ENCODE measurements at regions of chr9 and their contacts with region 1.

Region 1: GRCh38 chr9:120936011-120936763 is 9.6 kb upstream of the TRAF1 start:
- DNase-seq: peak; percentile 69 to 94 (median 88)
- ATAC-seq: peak; percentile 65
- H3K4me3 ChIP-seq: no peak overlapping the region
- H3K4me3 Mint-ChIP-seq: peak overlapping the region; percentile 30
- H3K27ac ChIP-seq: peak overlapping the region; percentile 52 to 95
- H3K27ac Mint-ChIP-seq: peak overlapping the region; percentile 90
- H3K4me1 ChIP-seq: peaks cover 61% of the 10 kb centered on the region
- H3K4me1 Mint-ChIP-seq: peaks cover 60% of the 10 kb centered on the region
- H3K27me3 ChIP-seq: no peaks in the 10 kb centered on the region
- H3K27me3 Mint-ChIP-seq: no peaks in the 10 kb centered on the region
- CTCF ChIP-seq: peak; percentile 84

Region 2: GRCh38 chr9:120464176-120464886 is 471.9 kb before region 1 on chr9:
- CTCF ChIA-PET with region 1: no interaction called
- POLR2A ChIA-PET with region 1: no interaction called
- intact Hi-C with region 1: no loop called
- DNase-seq: no peak
- ATAC-seq: no peak
- H3K4me3 ChIP-seq: no peak overlapping the region
- H3K4me3 Mint-ChIP-seq: no peak overlapping the region
- H3K27ac ChIP-seq: no peak overlapping the region
- H3K27ac Mint-ChIP-seq: no peak overlapping the region
- H3K4me1 ChIP-seq: no peaks in the 10 kb centered on the region
- H3K4me1 Mint-ChIP-seq: no peaks in the 10 kb centered on the region
- H3K27me3 ChIP-seq: no peaks in the 10 kb centered on the region
- H3K27me3 Mint-ChIP-seq: no peaks in the 10 kb centered on the region
- CTCF ChIP-seq: no peak

Region 3: DNA sequence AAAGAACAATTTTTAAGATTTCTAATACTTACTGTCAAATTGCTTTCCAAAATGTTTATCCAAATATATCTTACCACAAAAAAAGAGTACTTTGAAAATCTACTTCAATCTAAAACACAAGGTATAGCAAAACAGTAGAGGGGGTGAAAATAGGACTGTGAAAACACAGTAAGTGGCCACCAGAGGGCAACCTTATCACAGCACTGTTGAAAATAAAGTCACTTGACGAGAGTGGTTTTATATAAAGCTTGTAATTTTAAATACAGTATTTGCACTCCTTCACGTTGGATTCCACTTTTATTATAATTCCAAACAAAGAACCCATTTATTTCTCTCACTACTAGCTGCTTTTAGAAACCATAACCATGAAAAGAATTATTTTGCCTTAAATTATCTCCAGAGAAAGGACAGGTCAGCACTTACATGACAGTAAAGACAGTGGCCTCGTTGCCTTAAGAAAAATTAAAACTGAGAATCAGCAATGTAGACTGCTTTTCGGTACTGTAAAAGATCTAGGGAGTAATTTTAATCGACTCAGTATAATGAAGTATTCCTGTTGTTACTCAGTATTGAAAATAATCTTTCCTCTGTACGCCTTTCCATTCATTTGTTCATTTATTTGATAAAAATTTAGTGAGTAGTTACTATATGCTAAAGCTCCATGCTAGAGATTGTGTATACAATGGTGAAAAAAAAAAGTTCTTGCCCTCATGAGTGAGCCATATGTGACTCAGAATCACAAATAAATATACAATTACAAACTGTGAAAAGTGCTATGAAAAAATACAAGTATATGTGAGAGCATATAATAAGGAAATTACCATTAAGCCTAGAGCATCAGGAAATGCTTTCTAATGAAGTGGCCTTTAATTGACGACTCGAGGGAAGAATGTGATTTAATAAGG is 316.2 kb before region 1 on chr9:
- CTCF ChIA-PET with region 1: no interaction called
- POLR2A ChIA-PET with region 1: no interaction called
- intact Hi-C with region 1: no loop called
- DNase-seq: peak; percentile 8 to 76 (median 59)
- ATAC-seq: peak; percentile 65
- H3K4me3 ChIP-seq: no peak overlapping the region
- H3K4me3 Mint-ChIP-seq: no peak overlapping the region
- H3K27ac ChIP-seq: no peak overlapping the region
- H3K27ac Mint-ChIP-seq: no peak overlapping the region
- H3K4me1 ChIP-seq: no peaks in the 10 kb centered on the region
- H3K4me1 Mint-ChIP-seq: no peaks in the 10 kb centered on the region
- H3K27me3 ChIP-seq: no peaks in the 10 kb centered on the region
- H3K27me3 Mint-ChIP-seq: no peaks in the 10 kb centered on the region
- CTCF ChIP-seq: peak; percentile 98

Region 4: DNA sequence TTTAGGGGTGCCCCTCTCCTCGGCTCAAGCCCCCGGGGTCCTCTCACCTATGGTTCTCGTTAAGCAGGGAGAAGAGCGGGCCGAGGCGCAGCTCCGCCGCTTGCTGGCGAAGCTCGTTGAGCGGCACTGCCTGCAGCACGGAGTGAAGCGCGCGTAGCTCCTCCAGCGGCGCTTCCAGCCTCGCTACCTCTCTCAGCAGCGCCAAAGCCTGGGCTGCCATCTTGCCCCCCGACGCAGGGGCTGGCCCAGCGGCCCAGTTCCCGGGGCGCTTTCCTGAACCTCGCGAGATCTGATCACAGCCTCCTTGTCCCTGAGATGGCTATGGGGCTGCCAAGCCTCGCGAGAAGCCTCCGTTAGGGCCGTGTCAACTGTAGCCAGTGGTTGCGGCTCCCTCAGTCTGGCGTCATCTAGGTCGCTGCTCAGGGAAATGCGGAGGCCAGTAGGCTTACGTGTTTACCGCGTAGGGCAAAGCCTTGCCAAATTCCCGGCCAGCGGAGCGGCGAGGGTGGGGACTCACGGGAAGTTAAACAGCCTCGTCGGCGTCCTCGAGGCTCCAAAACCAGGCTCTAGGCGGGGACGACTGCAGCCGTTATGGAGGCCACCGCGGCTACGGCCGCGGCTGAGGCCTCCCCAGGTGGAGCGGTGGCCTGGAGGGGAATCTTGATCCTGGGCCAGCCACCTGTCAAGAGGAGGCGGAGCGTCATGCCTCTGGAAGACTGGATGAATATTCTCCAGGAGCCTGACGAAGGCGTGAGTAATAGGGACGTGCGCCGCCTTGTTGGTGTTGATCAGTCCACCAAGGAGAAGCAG is 93.3 kb before region 1 on chr9 and contains the start of gene PSMD5:
- CTCF ChIA-PET with region 1: interaction called, 6 read pairs
- POLR2A ChIA-PET with region 1: interaction called, 4 read pairs
- intact Hi-C with region 1: loop called in 1 of 2 experiments (anchors 1 kb)
- DNase-seq: peak; percentile 88 to 99 (median 95)
- ATAC-seq: peak; percentile 88
- H3K4me3 ChIP-seq: peak within 1 kb of the TSS; percentile 92 to 97
- H3K4me3 Mint-ChIP-seq: peak within 1 kb of the TSS; percentile 94
- H3K27ac ChIP-seq: peak within 1 kb of the TSS; percentile 94 to 98
- H3K27ac Mint-ChIP-seq: peak within 1 kb of the TSS; percentile 98
- H3K4me1 ChIP-seq: peaks cover 65% of the 10 kb centered on the region
- H3K4me1 Mint-ChIP-seq: peaks cover 78% of the 10 kb centered on the region
- H3K27me3 ChIP-seq: no peaks in the 10 kb centered on the region
- H3K27me3 Mint-ChIP-seq: no peaks in the 10 kb centered on the region
- CTCF ChIP-seq: no peak
- total RNA-seq, gene PSMD5: 38.5 to 58.2 TPM

Region 5: DNA sequence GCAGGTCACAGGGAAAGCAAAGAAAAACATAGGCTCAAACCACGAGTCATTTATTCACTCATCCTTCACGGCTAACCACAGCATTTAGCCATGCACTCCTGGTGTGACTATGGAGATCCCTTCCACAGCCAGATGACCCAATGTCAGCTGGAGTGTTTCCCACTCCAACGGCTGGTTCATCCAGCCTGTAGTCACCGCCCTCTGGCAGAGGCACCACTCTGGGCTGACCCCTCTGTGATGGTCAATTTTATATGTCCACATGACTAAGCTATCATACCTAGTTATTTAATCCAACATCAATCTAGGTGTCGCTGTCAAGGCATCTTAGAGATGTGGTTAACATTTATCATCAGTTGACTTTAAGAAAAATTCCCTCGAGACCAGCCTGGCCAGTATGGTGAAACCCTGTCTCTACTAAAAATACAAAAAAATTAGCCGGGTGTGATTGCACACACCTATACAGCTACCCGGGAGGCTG is 49.7 kb before region 1 on chr9:
- CTCF ChIA-PET with region 1: interaction called, 351 read pairs
- POLR2A ChIA-PET with region 1: interaction called, 1,009 read pairs
- intact Hi-C with region 1: no loop called
- DNase-seq: no peak
- ATAC-seq: no peak
- H3K4me3 ChIP-seq: no peak overlapping the region
- H3K4me3 Mint-ChIP-seq: no peak overlapping the region
- H3K27ac ChIP-seq: no peak overlapping the region
- H3K27ac Mint-ChIP-seq: peak overlapping the region; percentile 50
- H3K4me1 ChIP-seq: peaks cover 60% of the 10 kb centered on the region
- H3K4me1 Mint-ChIP-seq: peaks cover 58% of the 10 kb centered on the region
- H3K27me3 ChIP-seq: no peaks in the 10 kb centered on the region
- H3K27me3 Mint-ChIP-seq: no peaks in the 10 kb centered on the region
- CTCF ChIP-seq: no peak

Region 6: DNA sequence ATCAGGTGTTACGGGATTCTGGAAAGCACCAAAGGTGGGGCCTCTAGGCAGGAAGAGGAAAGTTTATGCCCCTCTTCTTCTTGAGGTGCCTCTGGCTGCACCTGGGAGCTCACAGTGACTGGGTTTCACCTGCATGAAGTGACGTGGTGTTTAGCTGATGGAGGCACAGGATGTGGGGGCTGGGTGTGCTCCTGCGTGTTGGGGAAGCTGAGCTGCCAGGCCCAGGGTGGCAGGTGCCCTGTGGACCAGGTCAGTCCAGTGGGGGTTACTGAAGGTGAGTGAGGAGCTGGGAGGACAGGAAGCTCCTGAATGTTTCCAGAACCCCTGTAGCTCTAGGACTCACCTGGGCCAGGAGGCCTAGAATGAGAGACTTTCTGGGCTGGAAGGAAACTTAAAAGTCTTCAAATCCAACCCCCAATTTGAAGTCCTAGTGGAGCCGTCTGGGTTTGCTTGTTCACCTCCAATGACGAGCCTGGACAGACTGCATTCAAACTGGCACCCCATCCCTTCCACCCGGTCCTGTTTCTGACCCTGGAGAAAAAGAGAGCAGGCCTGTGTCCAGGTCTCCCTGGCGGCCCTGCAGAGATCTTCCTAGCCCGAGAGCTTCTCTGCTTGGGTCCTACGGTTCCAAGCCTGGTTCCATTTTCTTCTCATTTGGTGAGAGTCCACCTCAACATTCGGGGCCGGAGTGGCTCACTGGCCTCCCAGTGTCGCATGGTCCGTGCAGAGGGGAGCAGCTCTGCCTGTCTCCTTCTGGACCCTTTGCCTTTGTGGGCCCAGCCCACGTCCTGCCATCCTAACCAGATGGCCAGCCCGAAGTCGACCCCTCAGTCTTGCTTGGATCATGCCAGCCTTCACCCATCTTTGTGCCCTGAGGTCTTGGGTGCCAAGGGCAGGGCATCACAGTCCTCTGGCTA is 31.9 kb before region 1 on chr9:
- CTCF ChIA-PET with region 1: interaction called, 25 read pairs
- POLR2A ChIA-PET with region 1: interaction called, 1,009 read pairs
- intact Hi-C with region 1: no loop called
- DNase-seq: peak in 8 of 9 experiments; percentile 48 to 91 (median 75)
- ATAC-seq: peak; percentile 83
- H3K4me3 ChIP-seq: no peak overlapping the region
- H3K4me3 Mint-ChIP-seq: peak overlapping the region; percentile 44
- H3K27ac ChIP-seq: peak overlapping the region; percentile 68 to 85
- H3K27ac Mint-ChIP-seq: peak overlapping the region; percentile 93
- H3K4me1 ChIP-seq: peaks cover 77% of the 10 kb centered on the region
- H3K4me1 Mint-ChIP-seq: peaks cover 84% of the 10 kb centered on the region
- H3K27me3 ChIP-seq: no peaks in the 10 kb centered on the region
- H3K27me3 Mint-ChIP-seq: no peaks in the 10 kb centered on the region
- CTCF ChIP-seq: no peak

Region 7: DNA sequence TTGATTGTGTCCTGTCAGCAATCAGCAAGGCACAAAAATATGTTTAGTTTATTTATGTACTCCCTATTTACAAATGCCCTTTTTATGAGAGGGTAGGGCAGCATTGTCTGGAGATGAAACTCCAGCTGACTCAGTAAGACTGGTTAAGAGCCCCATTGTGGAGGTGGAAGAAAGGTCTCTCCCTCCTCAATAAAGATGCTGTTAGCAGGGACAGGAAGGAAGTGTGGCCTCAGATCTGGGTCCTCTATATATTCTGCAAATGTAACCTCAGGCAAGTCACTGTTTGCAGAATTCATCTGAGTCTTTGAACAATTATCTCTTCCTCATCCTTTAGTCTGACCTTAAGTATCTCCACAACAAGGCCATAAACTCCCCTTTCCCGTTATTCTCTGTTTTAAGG is 38.7 kb after region 1 on chr9:
- CTCF ChIA-PET with region 1: no interaction called
- POLR2A ChIA-PET with region 1: no interaction called
- intact Hi-C with region 1: loop called in 1 of 2 experiments (anchors 5 kb)
- DNase-seq: peak in 2 of 9 experiments; percentile 5 to 20
- ATAC-seq: no peak
- H3K4me3 ChIP-seq: no peak overlapping the region
- H3K4me3 Mint-ChIP-seq: no peak overlapping the region
- H3K27ac ChIP-seq: peak overlapping the region in 1 of 2 experiments; percentile 30
- H3K27ac Mint-ChIP-seq: peak overlapping the region; percentile 82
- H3K4me1 ChIP-seq: peaks cover 16% of the 10 kb centered on the region
- H3K4me1 Mint-ChIP-seq: peaks cover 17% of the 10 kb centered on the region
- H3K27me3 ChIP-seq: no peaks in the 10 kb centered on the region
- H3K27me3 Mint-ChIP-seq: no peaks in the 10 kb centered on the region
- CTCF ChIP-seq: no peak

Region 8: GRCh38 chr9:122445155-122445749 is 1509.1 kb after region 1 on chr9:
- CTCF ChIA-PET with region 1: no interaction called
- POLR2A ChIA-PET with region 1: no interaction called
- intact Hi-C with region 1: no loop called
- DNase-seq: no peak
- ATAC-seq: no peak
- H3K4me3 ChIP-seq: no peak overlapping the region
- H3K4me3 Mint-ChIP-seq: no peak overlapping the region
- H3K27ac ChIP-seq: no peak overlapping the region
- H3K27ac Mint-ChIP-seq: no peak overlapping the region
- H3K4me1 ChIP-seq: no peaks in the 10 kb centered on the region
- H3K4me1 Mint-ChIP-seq: no peaks in the 10 kb centered on the region
- H3K27me3 ChIP-seq: no peaks in the 10 kb centered on the region
- H3K27me3 Mint-ChIP-seq: peaks cover 32% of the 10 kb centered on the region
- CTCF ChIP-seq: no peak

Measured in CD8-positive, alpha-beta T cell (primary cell).